ENCODE measurements at regions of chr12 and their contacts with region 1.

Region 1: GRCh38 chr12:110600254-110600653 is 13.7 kb upstream of the TCTN1 start:
- DNase-seq: peak; percentile 70
- H3K4me3 ChIP-seq: no peak overlapping the region
- H3K27ac ChIP-seq: no peak overlapping the region
- H3K4me1 ChIP-seq: peaks cover 13% of the 10 kb centered on the region
- CTCF ChIP-seq: peak; percentile 84

Region 2: GRCh38 chr12:110355073-110355472 is 245.2 kb before region 1 on chr12:
- CTCF ChIA-PET with region 1: no interaction called
- POLR2A ChIA-PET with region 1: no interaction called
- intact Hi-C with region 1: loop called (anchors 5 kb)
- DNase-seq: peak; percentile 74
- H3K4me3 ChIP-seq: no peak overlapping the region
- H3K27ac ChIP-seq: no peak overlapping the region
- H3K4me1 ChIP-seq: no peaks in the 10 kb centered on the region
- CTCF ChIP-seq: peak; percentile 89

Region 3: GRCh38 chr12:110449799-110450497 is 150.3 kb before region 1 on chr12 and contains the start of gene ARPC3:
- CTCF ChIA-PET with region 1: interaction called, 5 read pairs
- POLR2A ChIA-PET with region 1: interaction called, 6 read pairs
- intact Hi-C with region 1: loop called (anchors 1 kb)
- DNase-seq: peak; percentile 98
- H3K4me3 ChIP-seq: peak within 1 kb of the TSS; percentile 91
- H3K27ac ChIP-seq: peak within 1 kb of the TSS; percentile 87
- H3K4me1 ChIP-seq: peaks cover 31% of the 10 kb centered on the region
- CTCF ChIP-seq: peak; percentile 81
- total RNA-seq, gene ARPC3: 250 and 256 TPM in 2 replicates

Region 4: DNA sequence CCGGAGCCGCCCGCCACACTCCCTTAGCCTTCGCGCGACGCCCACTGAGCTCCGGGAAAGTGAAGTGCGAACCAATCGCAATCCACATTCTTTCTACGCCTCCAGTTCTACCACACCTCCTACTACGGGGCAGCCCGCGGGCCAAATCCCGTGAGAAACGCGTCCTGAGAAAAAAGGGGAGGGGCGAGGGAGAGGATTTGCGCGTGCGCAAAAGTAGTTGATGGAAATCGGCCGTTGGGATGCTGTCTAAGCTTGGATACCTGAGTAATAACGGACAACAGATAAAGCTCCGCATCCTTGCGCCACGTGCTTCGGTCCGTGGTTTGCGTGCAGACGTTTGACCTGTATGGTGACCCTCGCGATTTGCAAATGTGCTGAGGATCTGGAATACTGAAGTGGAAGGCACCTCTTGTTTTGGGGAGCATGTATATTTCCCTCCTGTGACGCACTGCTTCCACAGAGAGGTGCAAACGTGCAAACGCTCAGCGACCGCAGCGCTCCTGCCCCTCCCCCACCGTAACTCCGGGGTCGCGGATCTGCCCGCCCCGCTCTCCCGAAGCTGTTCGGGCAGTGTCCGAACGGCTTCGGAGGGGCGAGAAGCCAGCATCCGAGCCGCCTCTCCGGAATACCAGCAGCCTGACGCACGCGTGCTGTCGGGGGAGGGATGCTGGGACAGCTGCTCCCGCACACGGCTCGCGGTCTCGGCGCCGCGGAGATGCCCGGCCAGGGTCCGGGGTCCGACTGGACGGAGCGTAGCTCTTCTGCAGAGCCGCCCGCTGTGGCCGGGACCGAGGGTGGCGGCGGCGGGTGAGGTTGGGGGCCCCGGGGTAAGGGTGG is 131.8 kb before region 1 on chr12 and contains the starts of genes FAM216A and GPN3:
- CTCF ChIA-PET with region 1: interaction called, 3 read pairs
- POLR2A ChIA-PET with region 1: interaction called, 3 read pairs
- intact Hi-C with region 1: loop called (anchors 1 kb)
- DNase-seq: peak; percentile 99
- H3K4me3 ChIP-seq: peak within 1 kb of the TSS; percentile 95
- H3K27ac ChIP-seq: peak within 1 kb of the TSS; percentile 82
- H3K4me1 ChIP-seq: peaks cover 30% of the 10 kb centered on the region
- CTCF ChIP-seq: no peak
- total RNA-seq, gene FAM216A: 62.5 and 64.6 TPM in 2 replicates
- total RNA-seq, gene GPN3: 18.6 and 24.2 TPM in 2 replicates

Region 5: GRCh38 chr12:110555577-110556406 is 44.5 kb before region 1 on chr12:
- CTCF ChIA-PET with region 1: no interaction called
- POLR2A ChIA-PET with region 1: interaction called, 4 read pairs
- intact Hi-C with region 1: loop called (anchors 1 kb)
- DNase-seq: no peak
- H3K4me3 ChIP-seq: no peak overlapping the region
- H3K27ac ChIP-seq: no peak overlapping the region
- H3K4me1 ChIP-seq: peaks cover 3% of the 10 kb centered on the region
- CTCF ChIP-seq: no peak

Region 6: GRCh38 chr12:110568752-110569151 is 31.5 kb before region 1 on chr12:
- CTCF ChIA-PET with region 1: no interaction called
- POLR2A ChIA-PET with region 1: no interaction called
- intact Hi-C with region 1: no loop called
- DNase-seq: no peak
- H3K4me3 ChIP-seq: no peak overlapping the region
- H3K27ac ChIP-seq: no peak overlapping the region
- H3K4me1 ChIP-seq: peaks cover 18% of the 10 kb centered on the region
- CTCF ChIP-seq: no peak